ENCODE measurements at regions of chr4 and their contacts with region 1.

Region 1: DNA sequence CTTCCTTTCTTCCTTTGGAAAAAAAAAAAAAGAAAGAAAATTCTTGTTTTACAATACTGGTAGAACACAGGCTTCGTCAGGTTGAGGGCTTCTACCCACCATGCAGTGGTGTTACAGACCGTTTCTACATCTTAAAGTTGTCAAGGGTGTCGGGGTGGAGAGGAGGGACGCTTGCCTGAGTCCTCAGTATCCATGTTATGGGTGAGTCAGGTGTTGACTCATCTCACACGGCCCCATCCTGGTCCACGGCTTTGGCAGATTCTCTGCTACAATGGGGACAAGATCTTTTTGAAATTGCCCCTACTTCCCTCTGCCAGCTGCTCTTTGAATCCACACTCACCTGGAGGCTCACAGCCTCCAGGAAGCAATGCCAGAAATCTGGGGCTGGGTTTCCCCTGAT is 310.3 kb upstream of the ZFP42 start:
- DNase-seq: no peak
- H3K4me3 ChIP-seq: no peak overlapping the region
- H3K27ac ChIP-seq: no peak overlapping the region
- H3K4me1 ChIP-seq: no peaks in the 10 kb centered on the region
- H3K27me3 ChIP-seq: no peaks in the 10 kb centered on the region
- CTCF ChIP-seq: no peak

Region 2: GRCh38 chr4:186881521-186882220 is 803.6 kb before region 1 on chr4:
- CTCF ChIA-PET with region 1: no interaction called
- dilution Hi-C with region 1: no loop called
- in situ Hi-C with region 1: no loop called
- intact Hi-C with region 1: no loop called
- DNase-seq: peak; percentile 70
- H3K4me3 ChIP-seq: no peak overlapping the region
- H3K27ac ChIP-seq: peak overlapping the region; percentile 48
- H3K4me1 ChIP-seq: peaks cover 26% of the 10 kb centered on the region
- H3K27me3 ChIP-seq: no peaks in the 10 kb centered on the region
- CTCF ChIP-seq: no peak

Region 3: GRCh38 chr4:187586892-187587291 is 98.4 kb before region 1 on chr4:
- CTCF ChIA-PET with region 1: no interaction called
- dilution Hi-C with region 1: loop called (anchors 5 kb)
- in situ Hi-C with region 1: no loop called
- intact Hi-C with region 1: no loop called
- DNase-seq: no peak
- H3K4me3 ChIP-seq: no peak overlapping the region
- H3K27ac ChIP-seq: no peak overlapping the region
- H3K4me1 ChIP-seq: no peaks in the 10 kb centered on the region
- H3K27me3 ChIP-seq: peaks cover 2% of the 10 kb centered on the region
- CTCF ChIP-seq: no peak